Ascending aorta (tissue), 2 donors: ENCODE measurements at regions of chr1 and their contacts with region 1.

Region 1: GRCh38 chr1:32351399-32352238 is 10.7 kb downstream of the FAM229A start:
- DNase-seq: peak; percentile 76 to 97
- H3K4me3 ChIP-seq: peak overlapping the region; percentile 76 to 82
- H3K27ac ChIP-seq: peak overlapping the region; percentile 81 to 84
- H3K4me1 ChIP-seq: peaks cover 12 to 29% of the 10 kb centered on the region in 2 donors
- H3K27me3 ChIP-seq: no peaks in the 10 kb centered on the region
- CTCF ChIP-seq: peak in 1 of 3 experiments; percentile 6

Region 2: GRCh38 chr1:32307323-32307722 is 44.3 kb before region 1 on chr1:
- intact Hi-C with region 1: no loop called
- DNase-seq: no peak
- H3K4me3 ChIP-seq: no peak overlapping the region
- H3K27ac ChIP-seq: no peak overlapping the region
- H3K4me1 ChIP-seq: no peaks in the 10 kb centered on the region
- H3K27me3 ChIP-seq: no peaks in the 10 kb centered on the region
- CTCF ChIP-seq: no peak

Region 3: GRCh38 chr1:32335790-32336590 is 15.6 kb before region 1 on chr1 and contains the start of gene MARCKSL1:
- intact Hi-C with region 1: loop called (anchors 1 kb)
- DNase-seq: peak in 1 of 2 donors; percentile 84
- H3K4me3 ChIP-seq: peak within 1 kb of the TSS; percentile 78 to 97
- H3K27ac ChIP-seq: peak within 1 kb of the TSS in 1 of 2 donors; percentile 35
- H3K4me1 ChIP-seq: peaks cover 10 to 13% of the 10 kb centered on the region in 2 donors
- H3K27me3 ChIP-seq: no peaks in the 10 kb centered on the region
- CTCF ChIP-seq: no peak
- total RNA-seq, gene MARCKSL1: 21.8 TPM

Region 4: DNA sequence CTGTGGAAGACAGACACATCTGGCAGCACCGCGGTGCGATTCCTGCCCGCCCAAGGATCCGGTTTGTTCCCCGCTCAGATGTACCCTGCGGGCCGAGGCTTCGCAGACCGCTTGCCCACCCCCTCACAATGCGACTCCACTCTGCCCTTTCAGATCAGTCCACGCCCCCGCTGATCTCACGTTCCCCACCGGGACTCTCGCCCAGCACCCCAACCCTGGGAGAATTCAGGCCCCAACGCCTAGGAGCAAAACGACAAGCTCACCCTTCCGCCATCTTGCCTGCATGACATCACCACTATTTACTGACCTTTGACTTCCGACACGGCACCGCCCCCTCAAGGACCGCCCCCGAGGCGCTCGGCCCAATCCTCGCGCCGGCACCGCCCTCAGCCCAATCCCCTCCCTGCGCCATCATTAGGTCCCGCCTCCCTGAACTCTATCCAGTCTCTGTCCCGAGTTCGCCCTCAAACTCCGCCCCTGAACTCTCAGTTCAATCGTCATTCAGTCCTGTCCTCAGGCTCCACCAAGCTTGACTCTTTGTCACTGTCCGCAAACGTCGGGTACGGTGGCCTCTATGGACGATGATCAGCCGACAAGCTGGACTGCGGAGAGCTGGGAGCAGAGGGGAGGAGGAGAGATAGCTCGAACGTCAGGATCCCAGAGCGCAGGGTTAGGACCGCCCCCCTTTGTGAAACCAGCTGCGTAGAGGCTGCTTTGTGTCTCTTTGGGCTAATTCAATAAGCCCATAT is 42.7 kb after region 1 on chr1 and contains the start of gene BSDC1:
- intact Hi-C with region 1: loop called (anchors 1 kb)
- DNase-seq: peak; percentile 97 to 99
- H3K4me3 ChIP-seq: peak within 1 kb of the TSS; percentile 72 to 86
- H3K27ac ChIP-seq: peak within 1 kb of the TSS; percentile 87 to 95
- H3K4me1 ChIP-seq: peaks cover 9 to 24% of the 10 kb centered on the region in 2 donors
- H3K27me3 ChIP-seq: no peaks in the 10 kb centered on the region
- CTCF ChIP-seq: no peak
- total RNA-seq, gene BSDC1: 56.1 TPM